OCI-LY7 (cell line): ENCODE measurements at regions of chr13 and their contacts with region 1.

Region 1: GRCh38 chr13:112942689-112943308 is 26.2 kb upstream of the MCF2L start:
- DNase-seq: peak; percentile 90
- H3K4me3 ChIP-seq: peak overlapping the region; percentile 16
- H3K27ac ChIP-seq: peak overlapping the region; percentile 70
- H3K4me1 ChIP-seq: peaks cover 22% of the 10 kb centered on the region
- CTCF ChIP-seq: peak; percentile 81

Region 2: GRCh38 chr13:112928972-112929782 is 13.6 kb before region 1 on chr13:
- CTCF ChIA-PET with region 1: no interaction called
- POLR2A ChIA-PET with region 1: no interaction called
- intact Hi-C with region 1: no loop called
- DNase-seq: no peak
- H3K4me3 ChIP-seq: no peak overlapping the region
- H3K27ac ChIP-seq: no peak overlapping the region
- H3K4me1 ChIP-seq: no peaks in the 10 kb centered on the region
- CTCF ChIP-seq: no peak

Region 3: GRCh38 chr13:113029487-113030258 is 86.9 kb after region 1 on chr13:
- CTCF ChIA-PET with region 1: no interaction called
- POLR2A ChIA-PET with region 1: no interaction called
- intact Hi-C with region 1: loop called (anchors 1 kb)
- DNase-seq: peak; percentile 34
- H3K4me3 ChIP-seq: no peak overlapping the region
- H3K27ac ChIP-seq: no peak overlapping the region
- H3K4me1 ChIP-seq: no peaks in the 10 kb centered on the region
- CTCF ChIP-seq: peak; percentile 78